A549 (cell line): ENCODE measurements at regions of chr12 and their contacts with region 1.

Region 1: DNA sequence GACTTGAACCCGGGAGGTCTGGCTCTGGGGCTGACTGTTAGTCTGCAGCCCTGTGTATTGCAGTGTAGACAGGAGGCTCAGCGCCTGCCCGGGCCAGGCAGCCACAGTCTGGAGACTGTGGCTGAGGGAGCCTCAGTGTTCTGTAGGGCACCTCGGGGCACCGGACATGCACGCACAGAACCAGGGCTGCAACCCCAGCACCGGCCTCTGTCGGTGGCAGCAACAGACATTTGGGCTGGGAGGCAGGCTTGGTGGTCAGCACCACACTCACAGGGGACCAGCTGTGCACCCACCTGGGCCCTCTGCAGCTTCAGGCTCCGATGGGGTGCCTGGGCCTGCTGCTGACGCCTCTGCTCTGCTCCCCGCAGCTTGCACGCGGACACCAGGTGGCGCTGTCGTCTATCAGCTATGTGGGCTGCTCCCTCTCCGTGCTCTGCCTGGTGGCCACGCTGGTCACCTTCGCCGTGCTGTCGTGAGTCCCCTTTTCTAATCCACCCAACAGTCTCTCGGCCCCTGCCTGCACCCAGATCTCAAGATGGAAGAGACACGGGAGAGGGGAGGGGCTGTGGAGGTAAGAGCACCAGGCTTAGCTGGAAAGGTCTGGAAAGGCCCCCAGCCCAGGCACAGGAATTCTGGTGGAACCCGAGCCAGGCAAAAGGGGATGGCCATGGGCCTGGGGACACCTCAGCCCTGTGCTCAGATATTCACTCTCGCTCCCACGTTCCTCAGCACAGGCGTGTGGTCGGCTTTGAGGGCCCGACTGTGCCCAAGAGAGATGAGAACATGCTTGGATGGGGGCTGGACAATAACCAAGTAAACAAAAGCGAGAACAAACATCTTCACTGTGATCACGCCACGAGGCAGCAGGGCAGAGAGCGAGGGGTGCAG is 151.0 kb downstream of the ADGRD1 start:
- DNase-seq: peak; percentile 77 to 82
- ATAC-seq: peak; percentile 95 to 99
- H3K4me3 ChIP-seq: no peak overlapping the region
- H3K27ac ChIP-seq: peak overlapping the region; percentile 57 to 79; a peak in 4 of 6 replicates
- H3K4me1 ChIP-seq: peaks cover 4% of the 10 kb centered on the region; the same call in 2 of the 3 replicates
- CTCF ChIP-seq: peak; percentile 90
- EP300 ChIP-seq: no peak
- POLR2A ChIP-seq: no peak
- RAD21 ChIP-seq: peak; percentile 94 to 96

Region 2: GRCh38 chr12:130916251-130916911 is 188.3 kb before region 1 on chr12:
- CTCF ChIA-PET with region 1: interaction called, 29 read pairs
- POLR2A ChIA-PET with region 1: no interaction called
- DNase-seq: peak; percentile 56 to 74
- ATAC-seq: peak; percentile 48 to 90; a peak in 5 of 6 replicates
- H3K4me3 ChIP-seq: peak overlapping the region; percentile 21; the same call in 1 of the 3 replicates
- H3K27ac ChIP-seq: no peak overlapping the region
- H3K4me1 ChIP-seq: peaks cover 15% of the 10 kb centered on the region; the same call in 1 of the 3 replicates
- CTCF ChIP-seq: peak; percentile 92
- EP300 ChIP-seq: no peak
- POLR2A ChIP-seq: no peak
- RAD21 ChIP-seq: peak; percentile 97

Region 3: GRCh38 chr12:131092901-131093603 is 11.7 kb before region 1 on chr12:
- CTCF ChIA-PET with region 1: interaction called, 43 read pairs
- POLR2A ChIA-PET with region 1: no interaction called
- DNase-seq: no peak
- ATAC-seq: peak in 1 of 2 experiments; percentile 8; a peak in 1 of 6 replicates
- H3K4me3 ChIP-seq: no peak overlapping the region
- H3K27ac ChIP-seq: no peak overlapping the region
- H3K4me1 ChIP-seq: peaks cover 6% of the 10 kb centered on the region; the same call in 1 of the 3 replicates
- CTCF ChIP-seq: no peak
- EP300 ChIP-seq: no peak
- POLR2A ChIP-seq: no peak
- RAD21 ChIP-seq: no peak

Region 4: GRCh38 chr12:131121705-131122405 is 17.1 kb after region 1 on chr12:
- CTCF ChIA-PET with region 1: interaction called, 89 read pairs
- POLR2A ChIA-PET with region 1: no interaction called
- DNase-seq: peak in 1 of 2 experiments; percentile 27
- ATAC-seq: peak in 1 of 2 experiments; percentile 65; a peak in 4 of 6 replicates
- H3K4me3 ChIP-seq: no peak overlapping the region
- H3K27ac ChIP-seq: no peak overlapping the region
- H3K4me1 ChIP-seq: no peaks in the 10 kb centered on the region
- CTCF ChIP-seq: no peak
- EP300 ChIP-seq: no peak
- POLR2A ChIP-seq: no peak
- RAD21 ChIP-seq: no peak

Region 5: DNA sequence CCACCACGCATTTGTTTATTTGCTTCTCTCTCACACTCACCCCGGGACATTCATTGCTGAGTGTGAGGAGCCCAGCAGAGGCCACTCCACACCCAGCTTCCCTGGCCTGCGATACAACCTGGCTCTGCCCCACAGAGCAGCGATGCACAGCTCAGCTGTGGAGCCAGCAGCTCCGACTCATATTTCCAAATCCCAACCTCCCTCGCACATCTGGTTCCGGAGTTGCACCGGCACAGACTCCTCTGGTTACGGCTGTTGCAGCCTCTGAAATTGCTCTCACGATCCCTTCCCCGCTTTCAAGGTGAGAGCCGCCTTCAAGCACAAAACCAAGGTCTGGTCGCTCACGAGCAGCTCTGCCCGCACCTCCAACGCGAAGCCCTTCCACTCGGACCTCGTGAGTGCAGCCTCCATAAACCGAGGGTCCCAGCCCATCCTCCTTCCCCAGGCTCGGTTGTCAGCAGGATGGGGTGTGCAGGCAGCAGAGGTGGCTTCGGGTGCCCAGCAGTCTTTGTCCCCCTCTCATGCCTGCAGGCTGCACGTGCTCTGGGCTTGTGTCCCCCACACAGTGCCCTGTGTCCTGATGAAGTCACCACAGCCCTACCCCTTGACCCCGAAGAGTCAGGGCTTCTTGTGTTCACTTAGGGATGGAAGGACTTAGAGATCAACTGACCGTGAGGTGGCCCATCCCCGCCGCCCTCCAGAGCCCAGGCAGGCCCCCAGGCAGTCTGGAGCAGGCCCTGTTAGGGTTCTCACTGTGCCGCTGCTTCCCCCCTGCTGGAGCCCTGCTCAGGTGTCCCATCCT is 33.3 kb after region 1 on chr12:
- CTCF ChIA-PET with region 1: interaction called, 80 read pairs
- POLR2A ChIA-PET with region 1: no interaction called
- DNase-seq: peak; percentile 68 to 73
- ATAC-seq: peak; percentile 81 to 91
- H3K4me3 ChIP-seq: no peak overlapping the region
- H3K27ac ChIP-seq: peak overlapping the region; percentile 60 to 64; a peak in 4 of 6 replicates
- H3K4me1 ChIP-seq: peaks cover 24% of the 10 kb centered on the region
- CTCF ChIP-seq: peak; percentile 47
- EP300 ChIP-seq: no peak
- POLR2A ChIP-seq: no peak
- RAD21 ChIP-seq: peak; percentile 76 to 85

Region 6: GRCh38 chr12:131209082-131210070 is 104.7 kb after region 1 on chr12:
- CTCF ChIA-PET with region 1: no interaction called
- POLR2A ChIA-PET with region 1: no interaction called
- DNase-seq: no peak
- ATAC-seq: no peak
- H3K4me3 ChIP-seq: no peak overlapping the region
- H3K27ac ChIP-seq: no peak overlapping the region
- H3K4me1 ChIP-seq: no peaks in the 10 kb centered on the region
- CTCF ChIP-seq: no peak
- EP300 ChIP-seq: no peak
- POLR2A ChIP-seq: no peak
- RAD21 ChIP-seq: no peak

Region 7: DNA sequence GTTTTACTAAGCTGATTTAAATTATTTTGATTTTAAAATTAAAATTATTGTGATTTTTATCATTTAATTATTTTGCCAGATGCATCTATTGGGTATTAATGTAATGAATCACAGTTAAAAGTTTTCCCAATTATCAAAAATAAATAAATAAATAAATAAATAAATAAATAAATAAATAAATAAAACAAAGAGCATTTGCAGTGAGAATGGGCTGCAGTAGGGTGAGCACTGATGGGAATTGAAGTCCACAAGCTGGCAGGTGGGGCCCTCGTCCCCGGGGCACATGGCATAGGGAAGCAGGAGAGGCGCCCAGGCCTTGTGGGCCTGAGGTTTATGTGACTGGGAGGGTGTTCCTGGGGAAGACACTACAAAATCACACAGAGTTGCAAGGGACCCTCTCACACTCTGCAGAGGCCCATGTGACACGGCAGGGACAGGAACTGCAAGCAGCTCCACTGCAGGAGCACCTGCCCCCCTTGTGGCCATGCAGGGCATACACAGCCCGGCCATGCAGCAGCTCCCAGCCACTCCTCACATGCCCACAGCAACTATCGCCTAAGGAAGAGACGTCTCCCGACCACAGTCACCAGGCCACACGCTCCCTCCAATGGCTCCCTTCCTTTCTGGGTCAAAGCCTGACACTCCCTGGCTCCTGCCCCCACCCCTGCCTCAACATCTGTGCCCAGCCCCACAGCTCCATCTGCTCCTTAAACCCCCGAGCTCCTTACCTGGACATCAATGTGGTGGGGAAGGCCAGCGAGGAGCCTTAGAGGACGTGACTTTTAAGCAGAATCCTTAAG is 349.9 kb after region 1 on chr12:
- CTCF ChIA-PET with region 1: interaction called, 56 read pairs
- POLR2A ChIA-PET with region 1: no interaction called
- DNase-seq: peak; percentile 84 to 87
- ATAC-seq: peak; percentile 97 to 100
- H3K4me3 ChIP-seq: no peak overlapping the region
- H3K27ac ChIP-seq: peak overlapping the region in 1 of 2 experiments; percentile 56; a peak in 3 of 6 replicates
- H3K4me1 ChIP-seq: no peaks in the 10 kb centered on the region
- CTCF ChIP-seq: peak; percentile 64
- EP300 ChIP-seq: no peak
- POLR2A ChIP-seq: no peak
- RAD21 ChIP-seq: peak; percentile 81 to 88